Naive thymus-derived CD8-positive, alpha-beta T cell (primary cell): ENCODE measurements at regions of chr19 and their contacts with region 1.

Region 1: DNA sequence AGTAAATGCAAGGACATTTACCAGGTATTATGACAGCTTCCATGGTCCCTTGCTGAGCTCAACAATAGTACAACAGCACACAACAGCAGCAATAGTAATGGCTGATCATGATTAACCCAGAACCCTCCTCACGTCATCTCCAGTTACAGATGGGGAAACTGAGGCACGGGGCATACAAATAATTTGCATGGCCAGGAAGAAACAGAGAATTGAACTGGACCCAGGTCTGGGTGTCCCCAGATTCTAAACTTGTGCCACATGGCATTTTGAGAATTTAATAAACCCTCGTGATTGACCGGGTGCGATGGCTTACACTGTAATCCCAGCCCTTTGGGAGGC is 7.2 kb downstream of the MAST3 start:
- DNase-seq: no peak
- ATAC-seq: no peak
- H3K4me3 Mint-ChIP-seq: peak overlapping the region; percentile 70 to 85 (median 78)
- H3K27ac Mint-ChIP-seq: peak overlapping the region in 9 of 10 donors; percentile 19 to 91 (median 76)
- H3K4me1 Mint-ChIP-seq: peaks cover 14 to 53% (median 23%) of the 10 kb centered on the region in 4 donors
- H3K27me3 Mint-ChIP-seq: no peaks in the 10 kb centered on the region

Region 2: GRCh38 chr19:18029617-18030338 is 75.0 kb before region 1 on chr19:
- POLR2A ChIA-PET with region 1: interaction called, 12 read pairs
- DNase-seq: no peak
- ATAC-seq: peak in 1 of 2 donors; percentile 25
- H3K4me3 Mint-ChIP-seq: no peak overlapping the region
- H3K27ac Mint-ChIP-seq: peak overlapping the region in 5 of 10 donors; percentile 5 to 63 (median 25)
- H3K4me1 Mint-ChIP-seq: peaks cover 10 to 34% (median 23%) of the 10 kb centered on the region in 4 donors
- H3K27me3 Mint-ChIP-seq: no peaks in the 10 kb centered on the region